Left ventricle myocardium superior (tissue), 1 donor: ENCODE measurements at regions of chr3 and their contacts with region 1.

Region 1: DNA sequence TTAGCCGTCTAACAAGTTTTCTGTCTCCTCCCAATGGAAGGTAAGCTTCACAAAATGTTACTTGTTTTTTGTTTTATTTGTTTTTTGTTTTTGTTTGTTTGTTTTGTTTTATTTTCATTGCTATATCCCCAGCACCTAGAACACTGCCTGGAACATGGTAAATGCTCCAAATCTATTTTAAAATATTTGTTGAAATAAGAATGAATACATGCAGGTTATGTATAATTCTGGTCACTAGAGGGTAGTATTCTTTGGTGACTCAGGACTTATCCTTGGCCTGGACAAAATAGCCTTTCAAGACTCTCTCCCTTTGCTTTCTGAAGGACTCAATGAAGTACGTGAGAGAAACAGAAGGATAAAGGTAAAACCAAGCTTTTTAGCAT is 47.0 kb upstream of the PPP2R3A start:
- DNase-seq: no peak
- ATAC-seq: peak; percentile 67

Region 2: GRCh38 chr3:135929670-135930069 is 11.1 kb after region 1 on chr3:
- intact Hi-C with region 1: no loop called
- DNase-seq: no peak
- ATAC-seq: peak; percentile 89

Region 3: GRCh38 chr3:136042608-136043221 is 124.1 kb after region 1 on chr3:
- intact Hi-C with region 1: loop called (anchors 2 kb)
- DNase-seq: no peak
- ATAC-seq: peak; percentile 38